AG04449 (cell line): ENCODE measurements at regions of chr6 and their contacts with region 1.

Region 1: DNA sequence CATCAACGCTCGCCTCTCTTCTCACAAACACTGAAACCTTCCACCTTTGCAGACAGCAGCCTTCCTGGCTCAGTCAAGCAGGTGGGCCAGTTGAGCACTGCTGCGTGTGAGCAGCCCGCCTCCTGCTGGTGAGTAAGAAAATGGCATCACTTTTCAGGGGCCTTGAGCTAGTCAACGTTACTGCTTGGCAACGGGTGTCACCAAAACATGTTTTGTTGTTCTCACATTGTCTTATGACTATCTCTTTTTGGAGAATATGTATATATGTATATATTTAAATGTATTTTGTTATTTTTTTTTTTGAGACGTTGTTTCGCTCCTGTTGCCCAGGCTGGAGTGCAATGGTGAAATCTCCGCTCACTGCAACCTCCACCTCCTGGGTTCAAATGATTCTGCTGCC is 97.0 kb upstream of the AGPAT4 start:
- DNase-seq: no peak
- H3K4me3 ChIP-seq: no peak overlapping the region
- CTCF ChIP-seq: peak; percentile 95

Region 2: GRCh38 chr6:160733050-160733646 is 637.7 kb before region 1 on chr6:
- CTCF ChIA-PET with region 1: interaction called, 38 read pairs
- POLR2A ChIA-PET with region 1: no interaction called
- DNase-seq: no peak
- H3K4me3 ChIP-seq: no peak overlapping the region
- CTCF ChIP-seq: peak; percentile 30

Region 3: DNA sequence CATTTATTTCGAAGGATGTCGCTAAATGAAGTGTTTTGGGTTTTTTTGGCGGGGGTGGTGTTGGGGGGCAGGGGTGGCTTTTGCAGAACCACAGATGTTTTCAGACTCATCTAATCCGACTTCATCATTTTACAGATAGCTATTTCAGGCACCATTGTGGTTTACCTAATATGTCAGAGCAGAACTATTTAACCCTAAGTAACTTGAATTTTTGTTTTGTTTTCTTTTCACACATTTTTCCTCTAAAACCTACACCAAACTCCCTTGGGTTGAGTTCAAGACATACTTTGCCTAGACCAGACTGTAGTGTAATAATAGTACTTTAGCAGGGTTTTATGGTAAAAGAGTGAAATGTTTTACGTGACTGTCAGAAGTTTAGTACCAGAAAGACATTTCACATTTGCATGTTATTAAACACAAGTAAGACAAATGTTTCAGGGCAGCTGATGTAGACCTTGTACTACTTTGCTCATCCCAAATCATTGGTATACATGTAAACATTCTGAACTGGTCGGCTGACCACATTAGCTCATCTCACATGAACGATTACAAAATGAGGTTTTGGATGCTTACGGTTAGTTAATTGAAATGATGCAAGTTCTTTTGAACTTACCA is 341.6 kb before region 1 on chr6:
- CTCF ChIA-PET with region 1: interaction called, 22 read pairs
- POLR2A ChIA-PET with region 1: no interaction called
- DNase-seq: peak; percentile 95
- H3K4me3 ChIP-seq: no peak overlapping the region
- CTCF ChIP-seq: no peak

Region 4: GRCh38 chr6:161135695-161136591 is 234.9 kb before region 1 on chr6:
- CTCF ChIA-PET with region 1: interaction called, 37 read pairs
- POLR2A ChIA-PET with region 1: no interaction called
- DNase-seq: no peak
- H3K4me3 ChIP-seq: no peak overlapping the region
- CTCF ChIP-seq: no peak

Region 5: GRCh38 chr6:161168281-161168891 is 202.5 kb before region 1 on chr6:
- CTCF ChIA-PET with region 1: interaction called, 11 read pairs
- POLR2A ChIA-PET with region 1: no interaction called
- DNase-seq: peak; percentile 89
- H3K4me3 ChIP-seq: no peak overlapping the region
- CTCF ChIP-seq: no peak

Region 6: GRCh38 chr6:161226009-161226964 is 144.6 kb before region 1 on chr6:
- CTCF ChIA-PET with region 1: no interaction called
- POLR2A ChIA-PET with region 1: no interaction called
- DNase-seq: no peak
- H3K4me3 ChIP-seq: no peak overlapping the region
- CTCF ChIP-seq: no peak

Region 7: DNA sequence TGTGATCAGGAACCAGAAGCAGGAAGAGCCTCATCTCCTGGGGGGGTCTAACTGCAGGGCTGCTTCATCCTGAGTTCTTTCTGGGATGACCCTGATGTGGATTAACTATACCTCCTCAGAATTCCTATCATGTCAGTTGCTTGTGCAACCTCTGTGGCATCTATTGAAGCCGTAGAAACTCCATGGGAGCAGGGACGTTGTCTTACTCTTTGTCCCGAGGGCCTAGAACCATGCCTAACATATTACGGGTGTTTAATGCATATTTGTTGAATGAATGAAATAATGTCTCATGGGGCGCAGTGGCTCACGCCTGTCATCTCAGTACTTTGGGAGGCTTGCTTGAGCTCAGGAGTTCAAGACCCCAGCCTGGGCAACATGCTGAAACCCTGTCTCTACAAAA is 13.1 kb after region 1 on chr6:
- CTCF ChIA-PET with region 1: interaction called, 11 read pairs
- POLR2A ChIA-PET with region 1: no interaction called
- DNase-seq: no peak
- H3K4me3 ChIP-seq: no peak overlapping the region
- CTCF ChIP-seq: no peak

Region 8: DNA sequence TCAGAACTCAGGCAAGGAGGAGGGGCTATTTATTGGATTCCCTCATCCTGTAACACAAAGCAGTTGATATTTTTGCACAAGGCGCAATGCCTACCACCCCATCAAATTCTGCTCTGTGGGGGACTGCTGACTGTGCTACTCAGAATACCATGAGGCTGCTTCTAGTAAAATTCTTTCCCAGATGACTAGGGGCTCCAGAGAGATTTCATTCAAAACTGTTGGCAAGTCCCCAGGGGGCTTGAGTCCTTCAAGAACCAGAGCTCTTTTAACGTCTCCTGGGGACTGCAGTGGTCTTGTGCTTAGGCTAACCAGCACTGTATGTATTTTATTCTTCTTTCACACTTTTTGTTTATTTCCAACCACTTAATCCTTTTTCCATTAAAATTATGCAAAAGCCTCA is 268.9 kb after region 1 on chr6:
- CTCF ChIA-PET with region 1: no interaction called
- POLR2A ChIA-PET with region 1: no interaction called
- DNase-seq: no peak
- H3K4me3 ChIP-seq: no peak overlapping the region
- CTCF ChIP-seq: no peak